Sigmoid colon (tissue), 7 donors: ENCODE measurements at regions of chr12 and their contacts with region 1.

Region 1: GRCh38 chr12:12999959-13000615 is at the start of gene HEBP1:
- DNase-seq: peak; percentile 97
- H3K4me3 ChIP-seq: peak within 1 kb of the TSS; percentile 62 to 83 (median 78)
- H3K27ac ChIP-seq: peak within 1 kb of the TSS; percentile 83 to 98 (median 90)
- H3K4me1 ChIP-seq: peaks cover 0 to 39% (median 18%) of the 10 kb centered on the region in 4 donors
- H3K27me3 ChIP-seq: no peaks in the 10 kb centered on the region
- CTCF ChIP-seq: no peak
- EP300 ChIP-seq: no peak
- POLR2A ChIP-seq: peak; percentile 75 to 78
- total RNA-seq, gene HEBP1: 32.1 to 54.8 (median 38.2) TPM

Region 2: DNA sequence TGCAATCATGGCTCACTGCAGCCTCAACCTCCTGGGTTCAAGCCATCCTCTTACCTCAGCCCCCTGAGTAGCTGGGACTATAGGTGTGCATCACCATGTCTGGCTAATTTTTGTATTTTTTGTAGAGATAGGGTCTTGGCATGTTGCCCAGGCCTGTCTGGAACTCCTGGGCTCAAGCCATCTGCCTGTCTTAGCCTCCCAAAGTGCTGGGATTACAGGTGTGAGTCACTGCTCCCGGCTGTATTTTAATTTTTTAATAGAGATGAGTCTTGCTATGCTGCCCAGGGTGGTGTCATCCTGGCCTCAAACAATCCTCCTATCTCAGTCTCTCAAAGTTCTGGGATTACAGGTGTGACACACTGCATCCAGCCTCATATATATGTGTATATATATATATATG is 140.4 kb before region 1 on chr12:
- intact Hi-C with region 1: no loop called
- DNase-seq: no peak
- H3K4me3 ChIP-seq: no peak overlapping the region
- H3K27ac ChIP-seq: no peak overlapping the region
- H3K4me1 ChIP-seq: no peaks in the 10 kb centered on the region
- H3K27me3 ChIP-seq: no peaks in the 10 kb centered on the region
- CTCF ChIP-seq: no peak
- EP300 ChIP-seq: no peak
- POLR2A ChIP-seq: no peak

Region 3: GRCh38 chr12:13044002-13044905 is 44.2 kb after region 1 on chr12 and contains the start of gene FAM234B:
- intact Hi-C with region 1: loop called (anchors 2 kb)
- DNase-seq: peak; percentile 88
- H3K4me3 ChIP-seq: peak within 1 kb of the TSS; percentile 84 to 99 (median 96)
- H3K27ac ChIP-seq: peak within 1 kb of the TSS; percentile 68 to 78 (median 75)
- H3K4me1 ChIP-seq: peaks cover 0 to 23% (median 17%) of the 10 kb centered on the region in 4 donors
- H3K27me3 ChIP-seq: no peaks in the 10 kb centered on the region
- CTCF ChIP-seq: no peak
- EP300 ChIP-seq: no peak
- POLR2A ChIP-seq: peak in 1 of 2 donors; percentile 11
- total RNA-seq, gene FAM234B: 2.9 to 5.0 (median 4.7) TPM